Activated naive CD4-positive, alpha-beta T cell treated with anti-CD3 and anti-CD28 coated beads for 36 hours (primary cell): ENCODE measurements at regions of chr21 and their contacts with region 1.

Region 1: GRCh38 chr21:36385233-36386030 is at the start of gene CHAF1B:
- DNase-seq: peak; percentile 82
- H3K4me3 Mint-ChIP-seq: peak within 1 kb of the TSS; percentile 80
- H3K27ac Mint-ChIP-seq: peak within 1 kb of the TSS; percentile 46
- H3K4me1 Mint-ChIP-seq: peaks cover 20% of the 10 kb centered on the region
- H3K27me3 Mint-ChIP-seq: no peaks in the 10 kb centered on the region
- total RNA-seq, gene CHAF1B: 30.5 to 31.9 TPM

Region 2: DNA sequence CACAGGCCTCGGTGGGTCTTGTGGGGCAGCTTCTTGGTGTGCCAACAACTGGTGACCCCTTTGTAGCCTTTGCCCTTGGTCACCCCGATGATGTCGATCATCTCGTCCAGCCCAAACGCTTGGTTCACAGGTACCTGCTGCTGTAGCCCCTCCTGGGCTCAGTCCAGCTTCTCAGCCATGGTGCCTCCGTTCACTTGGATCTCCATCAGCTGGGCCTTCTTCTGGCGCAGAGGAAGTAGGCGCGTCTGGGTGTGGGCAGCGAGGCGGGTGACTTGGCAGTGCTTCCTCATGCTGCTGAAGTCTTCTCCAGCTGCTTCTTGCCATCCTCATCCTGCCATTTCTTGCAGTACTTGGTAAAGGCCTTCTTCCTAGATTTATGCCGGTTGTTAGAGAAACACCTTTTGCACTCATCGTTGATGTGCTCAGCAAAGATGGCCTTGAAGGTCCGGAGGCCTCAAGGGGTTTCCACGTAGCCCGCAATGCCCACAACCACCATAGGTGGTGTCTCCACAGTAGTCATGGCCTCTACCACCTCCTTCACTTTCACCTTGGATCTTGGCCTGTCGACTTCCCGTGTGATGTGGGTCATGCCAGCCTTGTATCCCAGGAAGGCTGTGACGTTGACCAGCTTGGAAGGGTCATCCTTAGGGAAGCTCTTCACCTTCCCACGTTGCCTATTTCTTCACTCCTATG is 215.8 kb before region 1 on chr21:
- CTCF ChIA-PET with region 1: no interaction called
- intact Hi-C with region 1: loop called (anchors 1 kb)
- DNase-seq: no peak
- H3K4me3 Mint-ChIP-seq: no peak overlapping the region
- H3K27ac Mint-ChIP-seq: no peak overlapping the region
- H3K4me1 Mint-ChIP-seq: peaks cover 4% of the 10 kb centered on the region
- H3K27me3 Mint-ChIP-seq: no peaks in the 10 kb centered on the region